Activated B cell treated with CpG ODN at 0.5 μM for 24 hours (primary cell): ENCODE measurements at regions of chr2 and their contacts with region 1.

Region 1: DNA sequence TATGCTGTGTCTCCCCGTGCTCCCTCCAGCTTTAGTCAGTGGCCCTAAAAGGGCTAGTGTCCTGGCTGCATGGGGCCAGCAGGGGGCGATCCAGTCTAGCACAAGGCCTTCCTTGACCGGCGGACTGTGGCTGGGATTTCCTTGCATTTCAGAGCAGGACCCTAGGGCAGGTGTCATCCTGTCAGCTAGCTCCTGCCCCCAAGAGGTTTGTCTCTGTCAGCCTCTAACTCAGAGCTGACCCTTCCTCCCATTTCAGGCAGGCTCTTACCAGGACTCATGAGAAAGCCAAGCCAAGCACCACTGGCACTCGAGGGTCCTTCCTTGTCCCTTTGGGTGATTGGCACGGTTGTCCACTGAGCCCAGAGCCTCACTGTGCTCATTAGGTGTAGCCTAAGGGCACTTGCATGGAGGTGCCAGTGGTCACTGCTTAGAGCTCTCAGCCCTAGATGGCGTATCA is 140.3 kb downstream of the RPIA start:
- DNase-seq: peak; percentile 72
- ATAC-seq: peak; percentile 80
- H3K4me3 Mint-ChIP-seq: peak overlapping the region; percentile 84
- H3K27ac Mint-ChIP-seq: peak overlapping the region; percentile 92
- H3K4me1 Mint-ChIP-seq: peaks cover 68% of the 10 kb centered on the region
- H3K27me3 Mint-ChIP-seq: no peaks in the 10 kb centered on the region
- CTCF ChIP-seq: peak; percentile 81

Region 2: DNA sequence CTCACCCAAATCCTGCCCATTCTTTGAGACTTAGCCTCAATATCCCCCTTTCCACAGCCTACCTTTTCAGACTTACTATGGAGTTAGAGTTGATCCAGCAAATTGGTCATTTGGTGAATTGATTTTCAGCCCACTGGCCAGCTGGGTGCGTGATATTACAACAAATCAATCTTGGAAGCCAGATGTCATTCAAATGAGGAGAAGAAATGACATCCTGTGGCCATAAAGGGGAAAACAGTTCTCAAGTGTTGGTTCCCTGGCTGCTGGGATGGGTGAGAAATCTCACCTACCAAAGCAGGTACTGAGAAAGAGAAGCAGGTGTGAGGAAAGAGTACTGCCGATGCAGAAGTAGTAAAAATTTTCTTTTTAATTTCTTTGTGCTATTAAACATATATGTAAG is 342.6 kb before region 1 on chr2:
- CTCF ChIA-PET with region 1: no interaction called
- POLR2A ChIA-PET with region 1: no interaction called
- intact Hi-C with region 1: no loop called
- DNase-seq: no peak
- ATAC-seq: no peak
- H3K4me3 Mint-ChIP-seq: no peak overlapping the region
- H3K27ac Mint-ChIP-seq: no peak overlapping the region
- H3K4me1 Mint-ChIP-seq: no peaks in the 10 kb centered on the region
- H3K27me3 Mint-ChIP-seq: peaks cover 8% of the 10 kb centered on the region
- CTCF ChIP-seq: no peak

Region 3: DNA sequence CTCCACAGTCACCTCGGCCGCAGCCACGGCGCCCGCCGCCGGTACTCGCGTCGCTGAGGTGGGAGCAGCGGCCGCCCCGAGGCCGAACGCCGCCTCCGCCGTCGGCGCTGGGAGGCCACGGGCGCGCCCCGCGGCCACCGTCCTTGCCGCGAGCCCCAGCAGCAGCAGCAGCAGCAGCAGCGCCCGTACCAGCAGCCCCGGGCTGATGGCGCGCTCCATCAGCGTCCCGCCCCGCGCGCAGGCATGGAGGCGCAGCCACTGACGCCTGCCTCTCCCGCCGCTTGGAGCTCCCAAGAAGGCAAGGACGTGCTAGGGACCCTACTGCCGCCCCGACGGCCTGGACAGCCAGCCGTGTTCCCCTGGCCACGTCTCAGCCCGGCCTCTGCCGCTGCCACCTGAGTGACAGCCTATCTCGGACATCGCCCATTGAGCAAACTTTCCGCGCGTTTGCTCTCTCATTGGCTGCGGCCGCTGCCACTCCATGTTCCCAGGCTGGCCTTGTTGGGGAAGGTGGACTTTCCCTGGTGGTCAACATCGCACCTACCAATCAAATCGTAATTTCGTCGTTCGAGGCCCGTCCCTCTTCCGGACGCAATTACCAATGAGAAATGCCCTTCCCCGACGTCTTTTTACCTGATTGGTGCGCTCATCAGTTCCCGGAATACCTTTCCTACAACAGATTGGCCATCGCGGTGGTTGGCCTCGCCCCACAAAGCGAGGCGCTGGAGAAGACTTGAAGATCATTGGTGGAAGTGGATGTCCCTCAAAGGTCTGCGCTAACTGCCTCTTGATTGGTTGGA is 204.6 kb before region 1 on chr2 and contains the start of gene EIF2AK3:
- CTCF ChIA-PET with region 1: no interaction called
- POLR2A ChIA-PET with region 1: no interaction called
- intact Hi-C with region 1: loop called (anchors 5 kb)
- DNase-seq: peak; percentile 88
- ATAC-seq: peak; percentile 84
- H3K4me3 Mint-ChIP-seq: peak within 1 kb of the TSS; percentile 97
- H3K27ac Mint-ChIP-seq: peak within 1 kb of the TSS; percentile 94
- H3K4me1 Mint-ChIP-seq: peaks cover 7% of the 10 kb centered on the region
- H3K27me3 Mint-ChIP-seq: no peaks in the 10 kb centered on the region
- CTCF ChIP-seq: no peak
- total RNA-seq, gene EIF2AK3: 28.2 and 28.6 TPM in 2 replicates

Region 4: GRCh38 chr2:88753833-88754584 is 77.8 kb before region 1 on chr2:
- CTCF ChIA-PET with region 1: no interaction called
- POLR2A ChIA-PET with region 1: interaction called, 11 read pairs
- intact Hi-C with region 1: loop called (anchors 2 kb)
- DNase-seq: no peak
- ATAC-seq: peak; percentile 82
- H3K4me3 Mint-ChIP-seq: peak overlapping the region; percentile 13
- H3K27ac Mint-ChIP-seq: peak overlapping the region; percentile 96
- H3K4me1 Mint-ChIP-seq: peaks cover 18% of the 10 kb centered on the region
- H3K27me3 Mint-ChIP-seq: no peaks in the 10 kb centered on the region
- CTCF ChIP-seq: no peak

Region 5: GRCh38 chr2:88852753-88853402 is 21.1 kb after region 1 on chr2:
- CTCF ChIA-PET with region 1: interaction called, 187 read pairs
- POLR2A ChIA-PET with region 1: interaction called, 1,820 read pairs
- intact Hi-C with region 1: loop called (anchors 1 kb)
- DNase-seq: no peak
- ATAC-seq: no peak
- H3K4me3 Mint-ChIP-seq: peak overlapping the region; percentile 63
- H3K27ac Mint-ChIP-seq: peak overlapping the region; percentile 93
- H3K4me1 Mint-ChIP-seq: peaks cover 94% of the 10 kb centered on the region
- H3K27me3 Mint-ChIP-seq: no peaks in the 10 kb centered on the region
- CTCF ChIP-seq: no peak

Region 6: GRCh38 chr2:88874063-88874657 is 42.3 kb after region 1 on chr2:
- CTCF ChIA-PET with region 1: interaction called, 80 read pairs
- POLR2A ChIA-PET with region 1: interaction called, 33 read pairs
- intact Hi-C with region 1: no loop called
- DNase-seq: no peak
- ATAC-seq: peak; percentile 75
- H3K4me3 Mint-ChIP-seq: no peak overlapping the region
- H3K27ac Mint-ChIP-seq: no peak overlapping the region
- H3K4me1 Mint-ChIP-seq: peaks cover 41% of the 10 kb centered on the region
- H3K27me3 Mint-ChIP-seq: no peaks in the 10 kb centered on the region
- CTCF ChIP-seq: no peak

Region 7: GRCh38 chr2:88897715-88898114 is 65.9 kb after region 1 on chr2:
- CTCF ChIA-PET with region 1: interaction called, 4 read pairs
- POLR2A ChIA-PET with region 1: interaction called, 16 read pairs
- intact Hi-C with region 1: loop called (anchors 1 kb)
- DNase-seq: no peak
- ATAC-seq: peak; percentile 71
- H3K4me3 Mint-ChIP-seq: peak overlapping the region; percentile 32
- H3K27ac Mint-ChIP-seq: peak overlapping the region; percentile 63
- H3K4me1 Mint-ChIP-seq: peaks cover 18% of the 10 kb centered on the region
- H3K27me3 Mint-ChIP-seq: no peaks in the 10 kb centered on the region
- CTCF ChIP-seq: no peak

Region 8: DNA sequence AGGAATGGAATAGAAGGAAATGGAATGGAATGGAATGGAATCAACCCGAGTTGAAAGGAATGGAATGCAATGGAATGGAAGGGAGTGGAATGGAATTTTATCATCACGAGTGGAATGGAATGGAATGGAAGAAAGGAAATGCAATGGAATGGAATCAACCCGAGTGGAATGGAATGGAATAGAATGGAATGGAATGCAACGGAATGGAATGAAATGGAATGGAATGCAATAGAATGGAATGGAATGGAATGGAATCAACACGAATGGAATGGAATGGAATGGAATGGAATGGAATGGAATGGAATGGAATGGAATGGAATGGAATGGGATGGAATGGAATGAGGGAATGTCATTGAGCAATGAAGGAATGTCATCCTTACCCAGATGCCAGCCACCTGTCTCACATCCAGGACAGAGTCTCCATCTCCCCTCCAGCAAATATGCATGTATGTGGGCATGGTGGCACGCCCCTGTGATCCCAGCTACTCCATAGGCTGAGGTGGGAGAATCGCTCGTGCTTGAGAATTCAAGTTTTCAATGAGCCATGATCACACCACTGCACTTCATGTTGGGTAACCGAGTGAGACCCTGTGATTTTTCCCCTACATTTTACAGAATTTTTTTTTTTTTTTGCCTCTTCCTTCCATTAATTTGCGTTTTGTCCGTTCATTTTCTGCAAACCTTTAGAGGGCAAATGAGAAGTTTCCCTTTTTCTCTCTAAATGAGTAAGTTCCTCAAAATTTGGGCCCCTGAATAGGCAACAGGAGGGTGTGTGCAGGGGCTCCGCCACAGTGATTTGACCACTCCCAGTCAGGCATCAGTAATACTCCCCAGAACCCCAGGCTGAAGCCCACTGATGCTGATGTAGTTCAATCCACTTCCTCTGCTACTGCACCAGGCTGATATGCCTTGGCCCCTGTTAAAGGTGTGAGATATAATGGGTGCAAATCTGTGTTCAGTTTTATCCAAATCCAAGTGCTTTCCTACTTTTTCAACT is 1009.3 kb after region 1 on chr2:
- CTCF ChIA-PET with region 1: no interaction called
- POLR2A ChIA-PET with region 1: no interaction called
- intact Hi-C with region 1: loop called (anchors 10 kb)
- DNase-seq: no peak
- ATAC-seq: peak; percentile 98
- H3K4me3 Mint-ChIP-seq: peak overlapping the region; percentile 4
- H3K27ac Mint-ChIP-seq: no peak overlapping the region
- H3K4me1 Mint-ChIP-seq: peaks cover 29% of the 10 kb centered on the region
- H3K27me3 Mint-ChIP-seq: peaks cover 3% of the 10 kb centered on the region
- CTCF ChIP-seq: no peak